Calu3 (cell line): ENCODE measurements at regions of chr9 and their contacts with region 1.

Region 1: DNA sequence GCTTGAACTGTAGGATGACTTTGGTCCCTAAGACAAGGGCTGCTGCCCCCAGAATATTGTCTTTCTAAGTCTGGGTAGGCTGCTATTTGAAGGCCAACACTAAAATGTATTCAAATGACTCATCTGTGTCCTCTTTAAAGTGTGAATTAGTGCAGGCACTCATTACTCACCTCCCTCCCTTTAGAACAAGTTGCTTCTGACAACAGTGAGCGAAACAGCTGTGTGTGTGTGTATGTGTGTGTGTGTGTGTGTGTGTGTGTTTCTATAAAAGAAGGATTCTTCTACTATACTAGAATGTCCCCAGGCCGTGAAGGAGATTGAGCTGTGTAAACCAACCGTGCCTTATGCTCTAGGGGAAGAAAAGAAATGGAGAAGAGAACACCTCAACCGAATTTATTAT is 1337.2 kb downstream of the PTPRD start:
- DNase-seq: no peak
- H3K4me3 Mint-ChIP-seq: no peak overlapping the region
- H3K27ac Mint-ChIP-seq: no peak overlapping the region
- H3K4me1 Mint-ChIP-seq: no peaks in the 10 kb centered on the region
- H3K27me3 Mint-ChIP-seq: no peaks in the 10 kb centered on the region
- CTCF ChIP-seq: no peak

Region 2: DNA sequence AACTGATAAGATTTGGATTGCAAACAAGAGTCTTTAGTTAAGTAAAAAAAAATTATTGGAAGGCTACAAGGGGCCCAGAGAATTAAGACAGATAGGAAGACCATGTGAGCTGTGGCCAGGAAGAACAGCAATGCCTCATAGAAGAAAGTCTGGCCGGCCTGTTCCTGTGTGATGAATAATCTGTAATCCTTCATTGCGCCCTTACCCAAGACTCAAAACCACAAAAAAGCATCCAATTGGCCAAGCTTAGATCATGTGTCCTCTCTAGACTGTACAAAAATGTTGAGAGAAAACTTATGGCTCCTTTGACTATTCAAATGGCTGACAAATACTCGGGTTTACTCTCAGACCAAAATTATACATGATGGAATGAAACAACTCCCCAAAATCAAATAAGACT is 46.3 kb before region 1 on chr9:
- CTCF ChIA-PET with region 1: no interaction called
- intact Hi-C with region 1: no loop called
- DNase-seq: no peak
- H3K4me3 Mint-ChIP-seq: no peak overlapping the region
- H3K27ac Mint-ChIP-seq: no peak overlapping the region
- H3K4me1 Mint-ChIP-seq: no peaks in the 10 kb centered on the region
- H3K27me3 Mint-ChIP-seq: no peaks in the 10 kb centered on the region
- CTCF ChIP-seq: no peak

Region 3: GRCh38 chr9:9341203-9341602 is 65.6 kb after region 1 on chr9:
- CTCF ChIA-PET with region 1: no interaction called
- intact Hi-C with region 1: loop called (anchors 2 kb)
- DNase-seq: no peak
- H3K4me3 Mint-ChIP-seq: no peak overlapping the region
- H3K27ac Mint-ChIP-seq: no peak overlapping the region
- H3K4me1 Mint-ChIP-seq: no peaks in the 10 kb centered on the region
- H3K27me3 Mint-ChIP-seq: no peaks in the 10 kb centered on the region
- CTCF ChIP-seq: no peak

Region 4: DNA sequence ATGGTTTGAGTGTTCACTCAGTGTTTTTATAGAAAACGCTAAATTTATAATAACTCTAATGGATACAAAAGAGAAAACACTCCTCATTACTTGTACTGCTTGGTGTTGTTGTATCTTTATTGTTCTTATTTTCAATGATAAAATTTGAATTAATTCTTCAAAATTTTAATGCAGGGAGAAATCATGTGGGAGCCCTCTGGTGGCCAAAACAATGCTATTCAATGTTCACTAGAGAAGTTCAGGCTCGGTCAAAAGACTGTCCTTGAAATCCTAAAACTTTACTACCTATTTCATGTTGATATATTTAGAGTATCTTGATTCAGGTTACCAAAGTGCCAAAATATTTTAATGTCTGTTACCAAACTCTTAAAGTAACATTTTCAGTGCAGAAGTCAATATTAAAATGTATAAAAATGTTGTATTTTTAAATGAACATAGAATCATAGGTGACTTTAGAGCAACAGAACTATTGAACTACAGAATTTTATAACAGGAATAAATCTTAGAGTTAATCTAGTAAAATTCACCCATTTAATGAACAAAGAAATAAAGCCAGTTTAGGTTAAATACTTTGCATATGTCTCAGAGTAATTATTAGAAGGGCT is 77.4 kb after region 1 on chr9:
- CTCF ChIA-PET with region 1: no interaction called
- intact Hi-C with region 1: loop called (anchors 1 kb)
- DNase-seq: peak; percentile 22
- H3K4me3 Mint-ChIP-seq: no peak overlapping the region
- H3K27ac Mint-ChIP-seq: no peak overlapping the region
- H3K4me1 Mint-ChIP-seq: no peaks in the 10 kb centered on the region
- H3K27me3 Mint-ChIP-seq: no peaks in the 10 kb centered on the region
- CTCF ChIP-seq: no peak

Region 5: DNA sequence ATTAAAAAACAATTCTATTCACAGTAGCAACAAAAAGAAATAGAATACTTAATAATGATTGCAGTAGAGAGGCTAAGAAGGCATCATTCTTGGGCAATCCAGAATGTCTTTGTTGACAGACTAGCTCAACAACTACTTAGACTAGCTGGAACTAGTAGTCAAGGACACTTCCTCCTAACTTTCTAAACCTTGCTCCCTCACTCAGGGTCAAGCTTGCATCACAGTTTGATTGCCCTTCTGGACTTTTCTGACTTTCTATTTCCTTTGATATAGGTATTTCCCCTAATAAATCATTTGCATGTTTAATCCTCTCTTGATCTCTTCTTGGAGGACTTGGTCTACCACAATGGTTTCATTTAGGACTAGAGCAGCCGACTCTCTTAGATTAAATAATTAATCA is 229.3 kb after region 1 on chr9:
- CTCF ChIA-PET with region 1: no interaction called
- intact Hi-C with region 1: loop called (anchors 10 kb)
- DNase-seq: no peak
- H3K4me3 Mint-ChIP-seq: no peak overlapping the region
- H3K27ac Mint-ChIP-seq: no peak overlapping the region
- H3K4me1 Mint-ChIP-seq: no peaks in the 10 kb centered on the region
- H3K27me3 Mint-ChIP-seq: no peaks in the 10 kb centered on the region
- CTCF ChIP-seq: no peak

Region 6: GRCh38 chr9:9598723-9599122 is 323.1 kb after region 1 on chr9:
- CTCF ChIA-PET with region 1: no interaction called
- intact Hi-C with region 1: loop called (anchors 10 kb)
- DNase-seq: no peak
- H3K4me3 Mint-ChIP-seq: no peak overlapping the region
- H3K27ac Mint-ChIP-seq: no peak overlapping the region
- H3K4me1 Mint-ChIP-seq: no peaks in the 10 kb centered on the region
- H3K27me3 Mint-ChIP-seq: no peaks in the 10 kb centered on the region
- CTCF ChIP-seq: no peak

Region 7: DNA sequence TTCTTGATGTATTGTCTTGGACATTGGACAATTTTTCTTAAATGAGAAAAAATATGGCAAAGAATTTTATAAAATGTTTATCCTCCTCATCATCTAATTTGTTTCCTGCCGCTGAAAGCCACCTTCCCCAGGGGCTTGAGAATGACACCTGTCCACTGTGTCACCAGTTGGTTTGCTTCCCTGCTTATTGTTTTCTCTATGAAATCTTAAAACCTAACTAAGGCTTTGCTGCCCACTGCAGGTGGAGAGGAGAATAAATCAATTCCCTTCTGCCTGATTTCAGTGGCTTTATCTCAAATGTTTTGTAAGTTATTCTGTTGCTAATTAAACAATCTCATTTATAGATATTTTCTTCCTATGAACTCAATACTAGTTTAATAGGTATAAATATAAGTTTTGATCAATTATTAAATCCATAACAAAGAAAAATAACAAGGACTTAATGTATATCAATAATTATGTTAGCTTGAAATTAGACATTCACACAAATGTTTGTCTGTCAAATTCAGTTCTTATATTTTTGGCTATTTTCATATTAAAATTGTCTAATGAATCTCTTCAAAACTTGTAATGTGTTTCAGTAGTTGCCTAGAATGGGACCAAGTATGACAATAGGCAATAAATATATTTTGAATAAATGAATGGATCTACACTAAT is 514.7 kb after region 1 on chr9:
- CTCF ChIA-PET with region 1: no interaction called
- intact Hi-C with region 1: loop called (anchors 1 kb)
- DNase-seq: peak; percentile 56
- H3K4me3 Mint-ChIP-seq: no peak overlapping the region
- H3K27ac Mint-ChIP-seq: no peak overlapping the region
- H3K4me1 Mint-ChIP-seq: no peaks in the 10 kb centered on the region
- H3K27me3 Mint-ChIP-seq: no peaks in the 10 kb centered on the region
- CTCF ChIP-seq: peak; percentile 20